RWPE1 (cell line): ENCODE measurements at regions of chr6 and their contacts with region 1.

Region 1: GRCh38 chr6:37314487-37315156 is 39.2 kb upstream of the RNF8 start:
- DNase-seq: peak; percentile 36
- H3K27ac ChIP-seq: no peak overlapping the region
- CTCF ChIP-seq: 0 out of 2 replicates have a peak, but pooled peaks have one; percentile 40

Region 2: GRCh38 chr6:37110500-37111461 is 203.8 kb before region 1 on chr6:
- CTCF ChIA-PET with region 1: no interaction called
- POLR2A ChIA-PET with region 1: no interaction called
- DNase-seq: no peak
- H3K27ac ChIP-seq: no peak overlapping the region
- CTCF ChIP-seq: no peak

Region 3: DNA sequence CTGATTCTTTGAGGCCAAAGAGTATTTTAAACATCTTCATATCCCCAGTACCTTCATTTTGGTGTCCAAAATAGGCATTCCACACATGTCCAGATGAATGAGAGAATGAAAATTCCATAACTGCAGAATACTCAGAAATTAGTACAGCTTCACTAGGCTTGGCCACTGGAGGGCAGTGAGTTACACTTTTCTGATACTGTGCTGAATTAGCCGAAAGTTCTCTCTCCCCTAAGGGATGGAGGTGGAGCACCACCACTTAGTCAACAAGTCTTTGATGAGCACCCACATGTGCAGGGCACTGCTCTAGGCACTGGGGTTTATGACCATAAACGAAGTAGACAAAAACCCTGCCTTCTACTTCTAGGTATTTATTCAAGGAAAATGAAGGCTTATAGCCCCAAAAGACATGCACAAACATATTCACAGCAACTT is 10.7 kb before region 1 on chr6:
- CTCF ChIA-PET with region 1: interaction called, 17 read pairs
- POLR2A ChIA-PET with region 1: no interaction called
- DNase-seq: peak; percentile 36
- H3K27ac ChIP-seq: no peak overlapping the region
- CTCF ChIP-seq: peak; percentile 64